MCF 10A (cell line): ENCODE measurements at regions of chr4 and their contacts with region 1.

Region 1: GRCh38 chr4:56977321-56978012 is at the start of gene NOA1:
- DNase-seq: peak; percentile 99
- H3K4me3 Mint-ChIP-seq: peak within 1 kb of the TSS; percentile 97
- H3K27ac Mint-ChIP-seq: peak within 1 kb of the TSS; percentile 97
- H3K4me1 Mint-ChIP-seq: peaks cover 16% of the 10 kb centered on the region
- H3K27me3 Mint-ChIP-seq: no peaks in the 10 kb centered on the region
- CTCF ChIP-seq: no peak
- total RNA-seq, gene NOA1: 17.1 and 23.2 TPM in 2 replicates

Region 2: DNA sequence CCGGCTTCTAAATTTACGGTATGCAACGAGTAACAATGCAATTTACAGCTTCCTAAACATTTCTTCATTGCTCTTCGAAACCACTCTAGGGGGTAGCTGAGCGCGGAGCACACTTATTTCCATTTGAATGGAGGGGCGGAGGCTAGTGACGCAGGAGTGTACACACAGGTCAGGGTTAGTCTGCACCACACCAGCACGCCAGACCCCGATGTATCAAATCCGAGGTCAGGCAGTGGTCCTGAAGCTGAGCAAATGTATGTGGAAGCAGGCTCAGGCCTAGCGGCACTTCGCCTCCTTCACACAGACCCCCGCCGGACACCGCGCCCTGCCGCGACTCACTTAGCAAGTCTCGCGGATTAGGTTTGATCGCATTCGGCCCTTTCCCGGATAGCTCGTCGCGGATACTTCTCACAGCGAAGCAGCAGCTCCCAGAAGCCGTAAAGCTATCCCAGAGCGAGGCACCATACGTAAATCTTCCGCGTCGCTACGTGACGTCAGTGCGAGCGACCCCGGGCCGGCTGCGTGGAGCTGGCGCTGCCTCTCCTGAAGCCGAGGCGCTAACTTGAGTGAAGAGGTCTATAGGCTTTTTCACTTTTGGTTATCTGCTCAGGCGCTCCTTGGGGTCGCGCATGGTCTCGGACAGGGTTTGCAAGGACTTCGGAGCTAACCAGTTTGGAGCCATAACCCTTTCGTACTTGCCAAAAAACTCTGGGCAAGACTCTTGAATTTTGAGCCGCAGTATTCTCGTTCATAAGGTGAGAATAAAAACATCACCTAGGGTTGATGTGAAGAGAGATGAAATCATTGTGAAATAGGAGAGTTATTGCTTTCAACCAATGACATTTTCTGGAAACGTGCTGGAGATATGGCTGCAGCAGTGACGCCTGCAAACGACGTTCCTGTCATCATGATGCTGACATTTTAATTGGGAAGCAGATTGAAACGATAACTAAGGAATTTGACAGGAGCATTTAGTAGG is 590.2 kb before region 1 on chr4 and contains the start of gene AASDH:
- CTCF ChIA-PET with region 1: no interaction called
- POLR2A ChIA-PET with region 1: interaction called, 15 read pairs
- intact Hi-C with region 1: no loop called
- DNase-seq: peak; percentile 94
- H3K4me3 Mint-ChIP-seq: peak within 1 kb of the TSS; percentile 96
- H3K27ac Mint-ChIP-seq: peak within 1 kb of the TSS; percentile 99
- H3K4me1 Mint-ChIP-seq: peaks cover 29% of the 10 kb centered on the region
- H3K27me3 Mint-ChIP-seq: no peaks in the 10 kb centered on the region
- CTCF ChIP-seq: no peak
- total RNA-seq, gene AASDH: 10.8 and 12.9 TPM in 2 replicates

Region 3: GRCh38 chr4:56907489-56908205 is 69.8 kb before region 1 on chr4 and contains the start of gene REST:
- CTCF ChIA-PET with region 1: interaction called, 4 read pairs
- POLR2A ChIA-PET with region 1: interaction called, 165 read pairs
- intact Hi-C with region 1: loop called (anchors 2 kb)
- DNase-seq: peak; percentile 63
- H3K4me3 Mint-ChIP-seq: peak within 1 kb of the TSS; percentile 97
- H3K27ac Mint-ChIP-seq: peak within 1 kb of the TSS; percentile 85
- H3K4me1 Mint-ChIP-seq: peaks cover 18% of the 10 kb centered on the region
- H3K27me3 Mint-ChIP-seq: no peaks in the 10 kb centered on the region
- CTCF ChIP-seq: no peak
- total RNA-seq, gene REST: 50.5 and 51.6 TPM in 2 replicates

Region 4: DNA sequence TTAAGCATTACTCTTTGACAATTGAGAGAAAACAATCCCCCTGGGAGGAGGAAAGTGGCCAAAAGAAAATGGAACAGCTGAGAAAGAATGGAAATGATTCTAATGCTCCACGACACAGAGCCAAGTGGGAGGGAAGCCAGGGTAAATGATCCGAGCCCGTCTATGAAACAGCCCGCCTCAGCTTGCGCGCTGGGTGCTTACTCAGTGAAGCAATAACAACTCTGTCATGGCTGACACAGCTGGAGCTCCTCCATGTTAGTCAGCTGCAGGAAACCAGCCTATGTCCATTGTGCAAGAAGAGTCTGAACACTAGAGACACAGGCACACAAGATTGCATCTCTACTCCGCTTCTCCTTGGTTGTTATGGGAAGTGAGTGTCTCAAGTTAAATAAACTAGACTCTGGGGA is 19.4 kb before region 1 on chr4:
- CTCF ChIA-PET with region 1: interaction called, 5 read pairs
- POLR2A ChIA-PET with region 1: interaction called, 29 read pairs
- intact Hi-C with region 1: no loop called
- DNase-seq: peak; percentile 93
- H3K4me3 Mint-ChIP-seq: peak overlapping the region; percentile 36
- H3K27ac Mint-ChIP-seq: peak overlapping the region; percentile 50
- H3K4me1 Mint-ChIP-seq: peaks cover 9% of the 10 kb centered on the region
- H3K27me3 Mint-ChIP-seq: no peaks in the 10 kb centered on the region
- CTCF ChIP-seq: no peak

Region 5: GRCh38 chr4:56990109-56990905 is 12.8 kb after region 1 on chr4:
- CTCF ChIA-PET with region 1: interaction called, 5 read pairs
- POLR2A ChIA-PET with region 1: interaction called, 69 read pairs
- intact Hi-C with region 1: no loop called
- DNase-seq: peak; percentile 41
- H3K4me3 Mint-ChIP-seq: no peak overlapping the region
- H3K27ac Mint-ChIP-seq: peak overlapping the region; percentile 54
- H3K4me1 Mint-ChIP-seq: peaks cover 13% of the 10 kb centered on the region
- H3K27me3 Mint-ChIP-seq: no peaks in the 10 kb centered on the region
- CTCF ChIP-seq: no peak

Region 6: GRCh38 chr4:57023104-57023503 is 45.6 kb after region 1 on chr4:
- CTCF ChIA-PET with region 1: interaction called, 3 read pairs
- POLR2A ChIA-PET with region 1: interaction called, 13 read pairs
- intact Hi-C with region 1: no loop called
- DNase-seq: peak; percentile 80
- H3K4me3 Mint-ChIP-seq: no peak overlapping the region
- H3K27ac Mint-ChIP-seq: peak overlapping the region; percentile 33
- H3K4me1 Mint-ChIP-seq: peaks cover 36% of the 10 kb centered on the region
- H3K27me3 Mint-ChIP-seq: no peaks in the 10 kb centered on the region
- CTCF ChIP-seq: no peak

Region 7: GRCh38 chr4:57059890-57060716 is 82.6 kb after region 1 on chr4:
- CTCF ChIA-PET with region 1: no interaction called
- POLR2A ChIA-PET with region 1: no interaction called
- intact Hi-C with region 1: no loop called
- DNase-seq: no peak
- H3K4me3 Mint-ChIP-seq: no peak overlapping the region
- H3K27ac Mint-ChIP-seq: no peak overlapping the region
- H3K4me1 Mint-ChIP-seq: peaks cover 16% of the 10 kb centered on the region
- H3K27me3 Mint-ChIP-seq: no peaks in the 10 kb centered on the region
- CTCF ChIP-seq: no peak

Region 8: GRCh38 chr4:57080781-57081650 is 103.5 kb after region 1 on chr4:
- CTCF ChIA-PET with region 1: no interaction called
- POLR2A ChIA-PET with region 1: interaction called, 11 read pairs
- intact Hi-C with region 1: no loop called
- DNase-seq: peak; percentile 85
- H3K4me3 Mint-ChIP-seq: peak overlapping the region; percentile 3
- H3K27ac Mint-ChIP-seq: peak overlapping the region; percentile 93
- H3K4me1 Mint-ChIP-seq: peaks cover 38% of the 10 kb centered on the region
- H3K27me3 Mint-ChIP-seq: no peaks in the 10 kb centered on the region
- CTCF ChIP-seq: no peak